ENCODE measurements at regions of chr2 and their contacts with region 1.

Region 1: DNA sequence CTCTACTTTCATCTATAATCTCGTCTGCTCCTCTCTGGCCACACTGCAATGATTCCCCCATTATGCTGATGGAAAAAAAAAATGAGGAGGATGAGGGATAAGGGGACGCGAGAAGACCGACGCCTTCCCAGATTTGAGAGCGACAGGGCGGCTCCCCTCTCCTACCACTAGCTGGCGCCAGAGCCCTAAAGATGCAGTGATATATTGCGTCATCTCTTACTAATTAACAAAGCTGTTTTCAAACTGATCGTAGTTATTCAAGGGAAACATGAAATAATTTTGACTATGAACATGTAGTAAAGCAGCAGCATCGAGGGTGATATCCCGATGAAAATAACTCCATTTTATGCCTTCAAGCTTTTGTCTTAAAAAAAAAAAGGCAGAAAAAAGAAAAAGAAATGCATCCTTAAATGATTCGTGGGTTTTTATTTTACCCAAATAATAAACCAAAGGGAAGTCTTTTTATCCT is 48.0 kb upstream of the HNRNPA3 start:
- DNase-seq: peak; percentile 92
- H3K4me3 ChIP-seq: peak overlapping the region in 1 of 3 experiments; percentile 26
- H3K27ac ChIP-seq: peak overlapping the region; percentile 91
- H3K4me1 ChIP-seq: peaks cover 51% of the 10 kb centered on the region
- H3K27me3 ChIP-seq: no peaks in the 10 kb centered on the region
- CTCF ChIP-seq: peak; percentile 99 to 100
- POLR2A ChIP-seq: no peak

Region 2: DNA sequence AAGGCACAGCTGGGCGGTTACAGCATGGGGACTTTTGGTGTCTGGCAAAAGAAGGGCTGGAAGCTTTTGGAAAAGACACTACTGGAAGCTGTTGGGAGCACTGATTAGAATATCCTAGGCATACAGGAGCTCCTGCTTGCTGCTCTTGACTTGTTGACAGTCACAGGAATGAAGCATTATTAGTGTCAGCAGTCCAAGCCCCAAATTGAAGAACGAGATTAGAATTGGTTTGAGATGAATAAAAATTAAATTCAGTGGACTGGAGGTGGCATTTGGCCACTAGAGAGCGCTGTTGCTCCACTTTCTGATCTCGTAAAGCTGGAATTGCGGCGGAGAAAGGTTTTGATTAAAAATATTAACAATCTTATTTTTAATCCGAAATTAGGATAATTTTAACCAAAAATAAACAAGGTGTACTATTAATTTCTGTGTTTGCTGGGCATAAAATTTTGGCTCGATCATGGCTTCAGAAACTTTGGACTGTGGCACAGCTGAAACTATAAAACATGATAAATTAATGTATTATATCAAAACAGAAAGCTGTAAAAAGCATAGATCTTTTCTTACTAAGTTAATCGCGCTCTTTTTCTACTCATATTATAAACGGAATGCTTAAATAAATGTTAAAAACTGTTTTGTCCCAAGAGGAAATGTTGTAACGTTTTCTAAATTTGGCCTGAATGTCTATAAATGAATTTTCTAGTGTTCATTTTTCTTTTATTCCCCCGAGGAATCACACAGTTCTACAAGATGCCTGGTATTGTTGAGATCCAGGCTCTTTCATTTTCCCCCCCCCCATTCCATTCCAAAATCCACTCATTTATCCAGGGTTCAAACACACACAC is 1037.5 kb before region 1 on chr2:
- CTCF ChIA-PET with region 1: interaction called, 39 read pairs
- POLR2A ChIA-PET with region 1: no interaction called
- dilution Hi-C with region 1: no loop called
- intact Hi-C with region 1: loop called (anchors 1 kb)
- DNase-seq: peak; percentile 68
- H3K4me3 ChIP-seq: peak overlapping the region in 2 of 3 experiments; percentile 48 to 67
- H3K27ac ChIP-seq: no peak overlapping the region
- H3K4me1 ChIP-seq: peaks cover 33% of the 10 kb centered on the region
- H3K27me3 ChIP-seq: peaks cover 5 to 6% of the 10 kb centered on the region in 2 experiments
- CTCF ChIP-seq: peak; percentile 61 to 66
- POLR2A ChIP-seq: no peak

Region 3: GRCh38 chr2:177129610-177130009 is 35.0 kb before region 1 on chr2:
- CTCF ChIA-PET with region 1: no interaction called
- POLR2A ChIA-PET with region 1: no interaction called
- dilution Hi-C with region 1: no loop called
- intact Hi-C with region 1: no loop called
- DNase-seq: no peak
- H3K4me3 ChIP-seq: no peak overlapping the region
- H3K27ac ChIP-seq: no peak overlapping the region
- H3K4me1 ChIP-seq: no peaks in the 10 kb centered on the region
- H3K27me3 ChIP-seq: peaks cover 0 to 3% of the 10 kb centered on the region in 2 experiments
- CTCF ChIP-seq: no peak
- POLR2A ChIP-seq: no peak

Region 4: GRCh38 chr2:177217247-177217843 is 52.7 kb after region 1 on chr2:
- CTCF ChIA-PET with region 1: interaction called, 98 read pairs
- POLR2A ChIA-PET with region 1: no interaction called
- dilution Hi-C with region 1: no loop called
- intact Hi-C with region 1: loop called (anchors 1 kb)
- DNase-seq: no peak
- H3K4me3 ChIP-seq: no peak overlapping the region
- H3K27ac ChIP-seq: no peak overlapping the region
- H3K4me1 ChIP-seq: peaks cover 22% of the 10 kb centered on the region
- H3K27me3 ChIP-seq: no peaks in the 10 kb centered on the region
- CTCF ChIP-seq: no peak
- POLR2A ChIP-seq: no peak

Region 5: DNA sequence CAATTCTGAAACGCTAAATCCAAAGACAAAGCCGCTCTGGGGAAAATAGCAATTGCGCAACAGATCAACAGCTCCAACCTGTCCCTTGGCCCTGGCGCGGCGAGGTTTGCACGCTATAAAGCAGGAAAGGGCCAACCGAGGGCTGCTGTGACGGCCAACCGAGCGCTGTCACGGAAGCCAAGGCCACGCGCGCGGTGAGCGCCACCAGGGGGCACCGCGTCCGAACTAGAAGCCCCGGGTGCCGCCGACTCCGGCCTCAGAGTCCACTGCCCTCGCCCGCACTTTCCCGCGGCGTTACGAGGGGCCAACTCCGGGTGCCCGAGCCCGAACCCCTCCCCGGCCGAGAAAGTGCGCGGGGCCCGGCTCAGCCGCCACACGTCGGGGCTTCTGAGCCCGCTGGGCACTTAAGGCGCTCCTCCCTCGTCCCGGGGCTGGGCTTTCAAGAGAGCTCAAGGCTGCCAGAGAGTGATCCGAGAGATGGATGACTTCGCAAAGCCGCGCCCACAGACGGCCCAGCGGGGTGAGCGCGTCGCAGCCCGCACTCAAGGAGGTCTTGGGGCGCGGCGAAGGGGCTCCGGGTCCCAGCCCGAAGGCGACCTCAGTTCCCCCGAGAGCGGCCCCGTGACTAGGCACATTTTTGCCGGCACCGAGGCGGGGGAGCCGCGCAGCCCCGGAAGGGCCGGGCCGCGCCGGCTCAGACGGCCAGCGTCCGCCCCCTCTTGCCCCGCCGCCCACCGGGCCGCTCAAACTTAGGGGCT is 99.0 kb after region 1 on chr2:
- CTCF ChIA-PET with region 1: interaction called, 136 read pairs
- POLR2A ChIA-PET with region 1: interaction called, 10 read pairs
- dilution Hi-C with region 1: loop called (anchors 10 kb)
- intact Hi-C with region 1: loop called (anchors 1 kb)
- DNase-seq: peak; percentile 97
- H3K4me3 ChIP-seq: peak overlapping the region; percentile 79 to 98 (median 90)
- H3K27ac ChIP-seq: peak overlapping the region; percentile 94
- H3K4me1 ChIP-seq: peaks cover 27% of the 10 kb centered on the region
- H3K27me3 ChIP-seq: no peaks in the 10 kb centered on the region
- CTCF ChIP-seq: peak; percentile 91 to 98
- POLR2A ChIP-seq: peak; percentile 84

Region 6: DNA sequence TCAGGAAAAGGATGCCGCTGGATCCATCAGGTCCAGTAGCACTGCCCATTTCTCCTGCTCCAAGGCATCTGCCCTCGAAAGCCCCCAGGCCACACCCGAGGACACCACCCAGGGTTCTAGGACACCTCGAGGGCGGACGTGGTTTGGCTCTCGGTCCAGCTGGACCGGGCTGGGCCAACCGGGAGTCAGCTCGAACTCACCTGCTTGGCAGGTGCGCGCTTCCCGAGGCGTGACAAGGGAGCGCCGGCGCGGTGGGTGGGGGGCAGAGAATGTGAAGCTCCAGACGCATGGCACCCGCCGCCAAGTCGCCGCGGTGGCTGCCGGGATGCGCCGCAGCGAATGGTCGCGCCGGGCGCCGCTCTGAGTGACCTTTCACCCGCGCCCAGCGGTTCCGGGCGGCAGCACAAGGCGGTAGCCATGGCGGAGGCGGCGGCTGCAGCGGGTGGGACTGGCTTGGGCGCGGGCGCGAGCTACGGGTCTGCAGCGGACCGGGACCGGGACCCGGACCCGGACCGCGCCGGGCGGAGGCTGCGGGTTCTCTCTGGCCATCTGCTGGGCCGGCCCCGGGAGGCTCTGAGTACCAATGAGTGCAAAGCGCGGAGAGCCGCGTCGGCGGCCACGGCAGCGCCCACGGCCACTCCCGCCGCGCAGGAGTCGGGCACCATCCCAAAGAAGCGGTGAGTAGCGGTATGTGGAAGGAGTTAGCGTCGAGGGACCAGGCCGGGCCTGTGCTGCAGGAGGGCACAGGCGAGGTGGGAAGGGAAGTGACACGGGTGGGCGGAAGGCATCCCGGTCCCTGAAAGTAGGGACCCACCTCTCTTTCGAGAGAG is 228.0 kb after region 1 on chr2 and contains the start of gene AGPS:
- CTCF ChIA-PET with region 1: interaction called, 17 read pairs
- POLR2A ChIA-PET with region 1: no interaction called
- dilution Hi-C with region 1: loop called (anchors 10 kb)
- intact Hi-C with region 1: loop called (anchors 2 kb)
- DNase-seq: peak; percentile 72
- H3K4me3 ChIP-seq: peak within 1 kb of the TSS; percentile 56 to 99 (median 96)
- H3K27ac ChIP-seq: peak within 1 kb of the TSS; percentile 91
- H3K4me1 ChIP-seq: peaks cover 49% of the 10 kb centered on the region
- H3K27me3 ChIP-seq: no peaks in the 10 kb centered on the region
- CTCF ChIP-seq: no peak
- POLR2A ChIP-seq: peak; percentile 85
- total RNA-seq, gene AGPS: 88.8 and 96.5 TPM in 2 replicates

Region 7: DNA sequence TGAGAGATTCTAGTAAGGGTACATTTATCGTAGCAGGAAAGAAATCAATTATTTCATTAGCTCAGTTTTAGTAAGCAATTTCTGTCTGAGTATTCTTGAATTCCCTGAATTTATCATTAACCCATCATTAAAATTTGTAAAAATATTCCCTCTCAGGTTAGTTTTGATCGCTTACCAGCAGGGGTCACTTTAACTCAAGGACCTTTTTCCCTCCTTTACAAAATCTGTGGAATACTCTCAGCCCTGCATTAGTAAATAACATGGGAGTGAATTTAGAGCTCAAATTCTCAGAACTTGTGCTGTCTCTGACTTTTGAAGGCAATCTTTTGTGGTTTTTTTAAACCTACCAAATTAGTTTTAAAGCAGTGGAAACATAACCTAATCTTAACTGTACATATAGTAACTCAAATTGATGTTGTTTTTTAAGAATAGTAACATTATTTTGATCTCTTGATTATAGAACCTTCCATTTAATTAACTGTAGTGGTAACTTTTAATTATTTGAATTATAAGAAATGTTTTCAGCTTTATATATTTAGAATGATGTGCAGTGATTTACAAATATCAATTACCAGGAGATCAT is 325.2 kb after region 1 on chr2:
- CTCF ChIA-PET with region 1: interaction called, 10 read pairs
- POLR2A ChIA-PET with region 1: no interaction called
- dilution Hi-C with region 1: no loop called
- intact Hi-C with region 1: no loop called
- DNase-seq: peak; percentile 55
- H3K4me3 ChIP-seq: no peak overlapping the region
- H3K27ac ChIP-seq: no peak overlapping the region
- H3K4me1 ChIP-seq: no peaks in the 10 kb centered on the region
- H3K27me3 ChIP-seq: no peaks in the 10 kb centered on the region
- CTCF ChIP-seq: peak; percentile 42 to 45
- POLR2A ChIP-seq: no peak

Region 8: DNA sequence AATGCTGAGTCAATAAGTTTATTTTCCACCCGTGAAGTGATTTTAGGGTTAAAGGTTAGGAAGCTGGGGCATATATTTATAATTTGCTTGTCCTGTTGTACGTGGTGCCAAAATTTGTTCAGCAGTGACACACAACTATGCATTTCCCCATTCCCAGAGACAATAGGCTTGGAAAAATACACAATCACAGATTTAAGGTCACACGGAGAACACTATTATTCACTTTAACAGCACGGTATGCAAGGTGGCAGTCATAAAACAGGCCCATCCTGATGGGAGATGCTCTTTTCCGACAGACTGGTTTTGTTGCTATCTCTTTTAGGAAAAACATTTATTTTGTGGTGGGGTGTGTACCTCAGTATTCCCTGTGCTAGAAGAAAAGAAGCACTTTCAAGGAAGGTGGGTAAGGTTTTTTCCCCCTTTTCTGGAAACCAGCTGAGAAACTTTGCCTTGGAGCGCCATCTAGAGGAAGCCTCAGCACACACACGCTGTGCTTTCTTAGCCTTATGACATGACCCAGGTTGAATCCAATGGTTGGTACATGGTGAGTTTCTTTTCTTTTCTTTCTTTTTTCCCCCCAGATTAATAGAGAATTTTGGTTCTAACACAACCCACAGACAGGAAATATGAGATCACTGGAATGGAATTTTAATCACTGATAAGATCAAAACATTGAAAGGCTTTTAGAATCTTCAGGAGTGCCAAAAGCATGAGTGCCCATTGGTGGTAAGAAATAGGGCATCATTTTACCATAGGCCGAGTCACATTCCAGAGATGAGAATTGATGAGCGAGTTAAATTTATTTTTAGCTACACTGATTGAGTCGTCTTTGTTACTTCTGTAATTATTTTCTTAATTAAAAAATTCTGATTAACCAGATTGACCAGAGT is 560.0 kb after region 1 on chr2:
- CTCF ChIA-PET with region 1: interaction called, 32 read pairs
- POLR2A ChIA-PET with region 1: no interaction called
- dilution Hi-C with region 1: no loop called
- intact Hi-C with region 1: loop called (anchors 1 kb)
- DNase-seq: peak; percentile 89
- H3K4me3 ChIP-seq: peak overlapping the region in 1 of 3 experiments; percentile 9
- H3K27ac ChIP-seq: peak overlapping the region; percentile 62
- H3K4me1 ChIP-seq: peaks cover 13% of the 10 kb centered on the region
- H3K27me3 ChIP-seq: no peaks in the 10 kb centered on the region
- CTCF ChIP-seq: peak; percentile 84 to 94
- POLR2A ChIP-seq: no peak